Activated CD4-positive, alpha-beta T cell treated with anti-CD3 and anti-CD28 coated beads for 36 hours (primary cell): ENCODE measurements at regions of chr19 and their contacts with region 1.

Region 1: DNA sequence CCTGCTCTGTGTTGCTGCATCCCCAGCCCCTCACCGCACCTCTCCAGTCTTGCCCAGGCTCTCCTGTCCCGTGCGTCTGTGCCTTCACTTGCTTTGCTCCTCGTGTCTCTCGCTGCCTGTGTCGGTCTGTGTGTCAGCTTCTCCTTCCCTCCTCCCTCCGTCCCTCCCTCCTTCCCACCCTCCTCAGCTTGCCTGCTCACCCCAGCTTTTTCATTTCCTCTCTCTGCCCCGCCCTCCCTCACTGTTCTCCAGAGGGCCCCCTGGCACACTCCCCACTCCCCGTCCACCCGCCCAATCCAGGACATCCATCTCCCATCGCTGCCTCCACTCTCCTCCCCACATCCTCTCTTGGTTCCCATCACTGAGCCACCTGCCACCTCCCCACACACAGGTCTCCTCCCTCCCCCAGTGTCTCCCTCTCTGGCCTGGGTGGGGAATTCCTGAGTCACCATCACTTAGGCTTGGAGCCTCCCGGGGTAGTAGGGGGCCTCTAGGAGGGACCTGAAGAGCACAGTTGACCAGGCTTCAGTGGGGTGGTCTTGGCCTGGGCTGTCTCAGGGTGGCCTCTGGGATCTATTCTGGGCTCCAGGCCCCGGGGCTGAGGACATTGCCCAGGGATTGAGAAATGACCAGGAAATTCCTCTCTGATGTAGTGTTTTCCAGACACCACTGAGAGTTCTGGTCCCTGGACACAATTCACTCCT is at the start of gene PTGIR:
- DNase-seq: peak; percentile 75
- ATAC-seq: peak; percentile 80
- H3K4me3 Mint-ChIP-seq: peak within 1 kb of the TSS; percentile 82
- H3K27ac Mint-ChIP-seq: peak within 1 kb of the TSS; percentile 92
- H3K4me1 Mint-ChIP-seq: peaks cover 45% of the 10 kb centered on the region
- H3K27me3 Mint-ChIP-seq: no peaks in the 10 kb centered on the region
- total RNA-seq, gene PTGIR: 40.1 to 41.0 TPM

Region 2: DNA sequence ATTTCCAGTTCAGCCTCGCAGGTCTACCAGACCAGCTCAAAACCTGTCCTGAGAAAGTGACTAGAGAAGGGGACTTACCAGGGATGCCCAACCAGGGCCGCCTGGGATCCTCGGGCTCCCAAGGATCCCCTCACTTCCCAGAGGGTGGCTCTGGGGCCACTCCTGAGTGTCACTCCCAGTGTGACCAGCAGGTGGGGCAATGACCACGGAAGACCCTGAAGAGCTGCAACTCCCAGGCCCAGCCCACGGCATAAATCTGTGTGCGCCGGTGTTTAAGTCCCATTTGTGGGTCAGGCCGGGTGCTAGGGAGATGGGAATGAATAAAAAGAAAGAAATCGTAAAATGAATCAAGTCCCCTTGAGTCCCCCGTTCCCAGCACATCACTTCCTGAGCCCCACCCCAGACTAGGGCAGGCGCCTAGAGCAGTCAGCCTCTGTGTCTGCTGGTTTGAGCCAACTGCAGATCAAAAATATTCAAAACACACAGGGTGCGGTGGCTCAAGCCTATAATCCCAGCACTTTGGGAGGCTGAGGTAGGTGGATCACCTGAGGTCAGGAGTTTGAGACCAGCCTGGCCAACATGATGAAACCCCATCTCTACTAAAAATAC is 10.9 kb before region 1 on chr19:
- CTCF ChIA-PET with region 1: interaction called, 12 read pairs
- POLR2A ChIA-PET with region 1: interaction called, 7 read pairs
- intact Hi-C with region 1: no loop called
- DNase-seq: peak; percentile 92
- ATAC-seq: peak; percentile 49
- H3K4me3 Mint-ChIP-seq: no peak overlapping the region
- H3K27ac Mint-ChIP-seq: peak overlapping the region; percentile 62
- H3K4me1 Mint-ChIP-seq: peaks cover 82% of the 10 kb centered on the region
- H3K27me3 Mint-ChIP-seq: no peaks in the 10 kb centered on the region

Region 3: DNA sequence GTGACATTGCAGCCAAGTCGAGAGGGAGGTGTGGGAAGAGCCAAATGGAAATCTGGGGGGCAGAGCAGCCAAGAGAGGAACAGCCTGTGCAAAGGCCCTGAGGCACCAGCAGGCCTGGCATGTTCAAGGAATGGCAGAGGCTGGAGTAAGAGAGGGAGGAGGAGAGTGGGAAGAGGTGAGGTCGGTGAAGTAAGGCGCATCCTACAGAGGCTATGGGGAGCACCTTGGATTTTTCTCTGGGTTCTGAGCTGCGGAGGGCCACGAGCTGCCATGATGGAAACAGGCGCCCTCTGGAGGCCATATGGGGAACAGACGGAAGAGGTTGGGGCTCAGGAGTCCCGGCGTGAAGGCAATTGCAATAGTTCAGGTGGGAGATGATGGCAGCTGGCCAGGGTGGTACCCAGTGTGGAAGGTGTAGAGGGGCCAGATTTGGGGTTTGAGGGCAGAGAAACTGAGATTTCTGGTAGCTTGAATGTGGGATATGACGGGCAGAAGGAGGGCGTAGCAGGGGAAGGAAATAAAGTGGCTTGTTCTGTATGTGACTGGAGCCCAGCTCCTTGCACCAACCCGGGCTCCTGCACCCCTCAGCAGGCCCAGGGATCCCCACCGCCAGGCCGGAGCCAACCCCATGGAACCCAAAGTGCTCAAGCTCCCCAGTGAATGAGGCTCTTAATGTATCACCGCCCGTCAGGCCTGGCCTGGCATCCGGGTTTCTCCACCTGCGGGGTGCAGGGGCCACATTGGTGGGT is 141.6 kb after region 1 on chr19:
- CTCF ChIA-PET with region 1: no interaction called
- POLR2A ChIA-PET with region 1: no interaction called
- intact Hi-C with region 1: no loop called
- DNase-seq: peak; percentile 78
- ATAC-seq: peak; percentile 92
- H3K4me3 Mint-ChIP-seq: no peak overlapping the region
- H3K27ac Mint-ChIP-seq: no peak overlapping the region
- H3K4me1 Mint-ChIP-seq: no peaks in the 10 kb centered on the region
- H3K27me3 Mint-ChIP-seq: no peaks in the 10 kb centered on the region